PC-9 (cell line): ENCODE measurements at regions of chr6 and their contacts with region 1.

Region 1: DNA sequence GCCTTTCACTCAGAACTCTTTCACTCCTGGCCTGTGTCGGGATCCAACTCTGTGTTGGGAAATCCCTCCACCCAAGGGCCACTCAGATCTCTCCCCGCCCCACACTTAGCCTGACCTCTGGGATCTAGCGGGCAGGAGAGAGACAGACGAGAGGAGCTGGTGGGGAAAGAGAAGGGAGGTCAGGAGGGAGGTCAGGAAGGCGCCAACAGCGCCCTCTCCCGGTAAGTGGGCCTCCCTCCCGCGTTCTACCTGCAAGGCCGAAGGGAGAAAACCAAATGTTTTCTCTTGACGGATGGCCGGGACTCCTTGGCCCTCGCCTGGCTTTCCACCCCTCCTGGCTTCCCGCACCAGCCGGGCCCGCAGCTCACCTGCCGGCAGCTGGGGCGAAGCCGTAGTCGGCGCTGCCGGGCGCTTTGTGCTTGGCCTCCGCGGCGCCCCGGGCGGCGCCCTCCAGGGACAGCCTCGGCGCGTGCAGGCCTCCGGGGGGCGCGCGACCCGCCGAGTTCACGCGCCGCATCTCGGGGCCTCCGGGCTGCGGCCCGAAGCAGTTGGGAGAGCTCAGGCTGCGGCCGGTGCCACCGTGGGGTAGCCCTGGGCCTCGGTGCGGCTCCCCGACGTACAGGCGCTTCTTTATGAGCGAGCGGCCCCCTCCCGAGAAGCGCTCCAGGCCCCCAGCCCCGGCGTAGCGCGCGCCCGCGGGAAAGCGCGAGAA is 38.2 kb downstream of the C6orf132 start:
- DNase-seq: no peak
- H3K4me3 ChIP-seq: no peak overlapping the region
- H3K27ac ChIP-seq: no peak overlapping the region
- H3K4me1 ChIP-seq: peaks cover 29% of the 10 kb centered on the region
- H3K27me3 ChIP-seq: no peaks in the 10 kb centered on the region
- CTCF ChIP-seq: no peak

Region 2: GRCh38 chr6:40586369-40587201 is 1517.7 kb before region 1 on chr6:
- CTCF ChIA-PET with region 1: no interaction called
- POLR2A ChIA-PET with region 1: no interaction called
- intact Hi-C with region 1: no loop called
- DNase-seq: no peak
- H3K4me3 ChIP-seq: no peak overlapping the region
- H3K27ac ChIP-seq: no peak overlapping the region
- H3K4me1 ChIP-seq: no peaks in the 10 kb centered on the region
- H3K27me3 ChIP-seq: peaks cover 6% of the 10 kb centered on the region; the same call in 1 of the 2 replicates
- CTCF ChIP-seq: no peak

Region 3: GRCh38 chr6:41927253-41927652 is 177.0 kb before region 1 on chr6:
- CTCF ChIA-PET with region 1: no interaction called
- POLR2A ChIA-PET with region 1: interaction called, 10 read pairs
- intact Hi-C with region 1: no loop called
- DNase-seq: no peak
- H3K4me3 ChIP-seq: no peak overlapping the region
- H3K27ac ChIP-seq: no peak overlapping the region
- H3K4me1 ChIP-seq: peaks cover 13% of the 10 kb centered on the region
- H3K27me3 ChIP-seq: no peaks in the 10 kb centered on the region
- CTCF ChIP-seq: no peak

Region 4: GRCh38 chr6:42086046-42087035 is 17.9 kb before region 1 on chr6:
- CTCF ChIA-PET with region 1: no interaction called
- POLR2A ChIA-PET with region 1: interaction called, 17 read pairs
- intact Hi-C with region 1: loop called (anchors 1 kb)
- DNase-seq: no peak
- H3K4me3 ChIP-seq: no peak overlapping the region
- H3K27ac ChIP-seq: peak overlapping the region; percentile 78
- H3K4me1 ChIP-seq: peaks cover 31% of the 10 kb centered on the region
- H3K27me3 ChIP-seq: no peaks in the 10 kb centered on the region
- CTCF ChIP-seq: no peak; the same call in 1 of the 2 replicates

Region 5: GRCh38 chr6:42136508-42137193 is 32.4 kb after region 1 on chr6:
- CTCF ChIA-PET with region 1: no interaction called
- POLR2A ChIA-PET with region 1: interaction called, 10 read pairs
- intact Hi-C with region 1: no loop called
- DNase-seq: peak in 1 of 2 experiments; percentile 94
- H3K4me3 ChIP-seq: peak overlapping the region; percentile 43; the same call in 1 of the 2 replicates
- H3K27ac ChIP-seq: peak overlapping the region; percentile 98
- H3K4me1 ChIP-seq: peaks cover 77% of the 10 kb centered on the region
- H3K27me3 ChIP-seq: no peaks in the 10 kb centered on the region
- CTCF ChIP-seq: no peak